ENCODE measurements at regions of chr1 and their contacts with region 1.

Region 1: GRCh38 chr1:169586395-169587255 is at the start of gene F5:
- DNase-seq: peak; percentile 86
- H3K4me3 Mint-ChIP-seq: peak within 1 kb of the TSS; percentile 89
- H3K27ac Mint-ChIP-seq: peak within 1 kb of the TSS; percentile 92
- H3K4me1 Mint-ChIP-seq: peaks cover 70% of the 10 kb centered on the region
- H3K27me3 Mint-ChIP-seq: no peaks in the 10 kb centered on the region
- total RNA-seq, gene F5: 12.2 to 15.7 TPM

Region 2: GRCh38 chr1:169601093-169601881 is 14.7 kb after region 1 on chr1:
- CTCF ChIA-PET with region 1: interaction called, 17 read pairs
- POLR2A ChIA-PET with region 1: no interaction called
- DNase-seq: peak; percentile 12
- H3K4me3 Mint-ChIP-seq: no peak overlapping the region
- H3K27ac Mint-ChIP-seq: peak overlapping the region; percentile 20
- H3K4me1 Mint-ChIP-seq: peaks cover 58% of the 10 kb centered on the region
- H3K27me3 Mint-ChIP-seq: peaks cover 5% of the 10 kb centered on the region